ENCODE measurements at regions of chr19 and their contacts with region 1.

Region 1: GRCh38 chr19:47973529-47973928 is 18.4 kb downstream of the BSPH1 start:
- DNase-seq: no peak
- ATAC-seq: no peak
- H3K4me3 ChIP-seq: no peak overlapping the region
- H3K27ac ChIP-seq: no peak overlapping the region
- H3K4me1 ChIP-seq: no peaks in the 10 kb centered on the region
- H3K27me3 ChIP-seq: peaks cover 0 to 12% (median 2%) of the 10 kb centered on the region in 3 donors
- CTCF ChIP-seq: no peak

Region 2: GRCh38 chr19:48152551-48152950 is 179.0 kb after region 1 on chr19:
- intact Hi-C with region 1: loop called (anchors 5 to 10 kb)
- DNase-seq: peak; percentile 45 to 69
- ATAC-seq: peak; percentile 57 to 84 (median 73)
- H3K4me3 ChIP-seq: no peak overlapping the region
- H3K27ac ChIP-seq: no peak overlapping the region
- H3K4me1 ChIP-seq: no peaks in the 10 kb centered on the region
- H3K27me3 ChIP-seq: no peaks in the 10 kb centered on the region
- CTCF ChIP-seq: peak; percentile 89

Region 3: GRCh38 chr19:48290771-48291488 is 317.4 kb after region 1 on chr19:
- intact Hi-C with region 1: loop called in 1 of 2 experiments (anchors 10 kb)
- DNase-seq: peak; percentile 87 to 91
- ATAC-seq: peak; percentile 74 to 98 (median 88)
- H3K4me3 ChIP-seq: peak overlapping the region; percentile 53
- H3K27ac ChIP-seq: no peak overlapping the region
- H3K4me1 ChIP-seq: peaks cover 3% of the 10 kb centered on the region
- H3K27me3 ChIP-seq: peaks cover 0 to 18% (median 2%) of the 10 kb centered on the region in 3 donors
- CTCF ChIP-seq: peak; percentile 98